ENCODE measurements at regions of chr5 and their contacts with region 1.

Region 1: GRCh38 chr5:95858661-95859326 is 36.3 kb upstream of the GLRX start:
- DNase-seq: peak; percentile 81 to 90
- H3K4me3 ChIP-seq: no peak overlapping the region
- H3K27ac ChIP-seq: peak overlapping the region; percentile 38 to 70 (median 48)
- H3K4me1 ChIP-seq: peaks cover 10 to 71% of the 10 kb centered on the region in 2 donors
- H3K27me3 ChIP-seq: no peaks in the 10 kb centered on the region
- CTCF ChIP-seq: peak; percentile 96 to 99 (median 98)
- POLR2A ChIP-seq: peak in 1 of 2 donors; percentile 32

Region 2: DNA sequence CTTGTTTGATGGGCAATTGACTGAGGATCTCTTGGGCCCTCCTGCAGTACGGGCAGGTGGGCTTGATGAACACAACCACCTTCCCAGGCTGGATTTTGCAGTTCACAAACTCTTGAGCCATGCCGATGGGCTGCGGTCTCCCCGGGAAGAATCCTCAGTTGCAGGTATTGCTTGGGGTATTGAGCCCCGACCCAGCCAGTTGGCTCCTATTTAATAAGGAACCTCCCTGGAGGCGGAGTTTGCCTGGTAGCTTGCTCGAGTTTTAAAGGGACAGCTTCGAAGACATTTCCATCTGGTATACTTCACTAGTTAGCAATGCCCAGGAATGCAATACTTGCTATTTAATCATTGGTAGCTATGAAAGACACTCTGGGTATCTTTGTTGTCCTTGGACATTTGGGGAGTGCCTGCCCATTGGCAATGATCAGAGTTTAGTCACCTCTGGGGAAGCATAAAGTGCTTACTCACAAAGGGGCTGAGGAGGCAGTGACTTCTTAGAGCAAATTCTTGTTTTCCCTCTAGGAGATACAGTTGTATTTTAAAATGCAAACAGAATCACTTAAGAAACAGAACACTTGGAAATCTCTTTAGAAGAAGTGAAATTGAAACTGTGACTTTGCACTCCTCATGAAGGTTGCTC is 36.1 kb before region 1 on chr5 and contains the start of gene GLRX:
- intact Hi-C with region 1: no loop called
- DNase-seq: peak; percentile 80 to 82
- H3K4me3 ChIP-seq: peak within 1 kb of the TSS; percentile 40 to 90 (median 46)
- H3K27ac ChIP-seq: peak within 1 kb of the TSS; percentile 81 to 92 (median 83)
- H3K4me1 ChIP-seq: peaks cover 20 to 37% of the 10 kb centered on the region in 2 donors
- H3K27me3 ChIP-seq: no peaks in the 10 kb centered on the region
- CTCF ChIP-seq: no peak
- POLR2A ChIP-seq: peak; percentile 24 to 86
- total RNA-seq, gene GLRX: 30.1 to 68.7 (median 37.7) TPM

Region 3: GRCh38 chr5:95900383-95900958 is 41.7 kb after region 1 on chr5:
- intact Hi-C with region 1: no loop called
- DNase-seq: peak; percentile 54 to 57
- H3K4me3 ChIP-seq: no peak overlapping the region
- H3K27ac ChIP-seq: no peak overlapping the region
- H3K4me1 ChIP-seq: no peaks in the 10 kb centered on the region
- H3K27me3 ChIP-seq: no peaks in the 10 kb centered on the region
- CTCF ChIP-seq: no peak
- POLR2A ChIP-seq: no peak

Region 4: GRCh38 chr5:96336351-96336985 is 477.7 kb after region 1 on chr5:
- intact Hi-C with region 1: loop called (anchors 2 kb)
- DNase-seq: peak; percentile 75 to 76
- H3K4me3 ChIP-seq: no peak overlapping the region
- H3K27ac ChIP-seq: peak overlapping the region in 2 of 3 donors; percentile 6 to 7
- H3K4me1 ChIP-seq: peaks cover 5 to 24% of the 10 kb centered on the region in 2 donors
- H3K27me3 ChIP-seq: no peaks in the 10 kb centered on the region
- CTCF ChIP-seq: peak; percentile 48 to 91 (median 85)
- POLR2A ChIP-seq: no peak

Region 5: DNA sequence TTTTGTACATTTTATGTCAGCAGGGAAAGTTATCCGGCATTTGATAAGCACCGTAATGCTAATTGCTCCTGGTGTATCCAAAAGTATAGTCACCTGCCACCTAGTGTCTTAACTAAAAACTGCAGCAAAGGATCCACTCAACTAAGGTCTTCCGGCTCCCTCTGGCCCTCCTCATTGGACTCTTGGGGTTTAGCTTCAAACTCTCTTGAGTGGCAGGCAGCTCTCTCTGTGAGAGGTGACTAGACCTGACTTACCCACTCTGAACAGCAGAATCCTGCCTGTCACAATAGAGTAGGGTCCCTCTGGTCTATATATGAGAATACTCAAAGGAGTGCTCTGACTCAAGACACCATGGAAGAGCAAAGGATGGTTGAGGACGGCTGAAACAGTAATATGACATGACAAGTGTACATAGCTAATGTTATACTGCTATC is 743.0 kb after region 1 on chr5:
- intact Hi-C with region 1: loop called (anchors 5 kb)
- DNase-seq: peak; percentile 19 to 28
- H3K4me3 ChIP-seq: no peak overlapping the region
- H3K27ac ChIP-seq: no peak overlapping the region
- H3K4me1 ChIP-seq: no peaks in the 10 kb centered on the region
- H3K27me3 ChIP-seq: no peaks in the 10 kb centered on the region
- CTCF ChIP-seq: peak; percentile 42 to 83 (median 66)
- POLR2A ChIP-seq: no peak